GM18951 (cell line): ENCODE measurements at regions of chr22 and their contacts with region 1.

Region 1: GRCh38 chr22:40950962-40951794 is at the start of gene RBX1:
- POLR2A ChIP-seq: peak; percentile 96

Region 2: DNA sequence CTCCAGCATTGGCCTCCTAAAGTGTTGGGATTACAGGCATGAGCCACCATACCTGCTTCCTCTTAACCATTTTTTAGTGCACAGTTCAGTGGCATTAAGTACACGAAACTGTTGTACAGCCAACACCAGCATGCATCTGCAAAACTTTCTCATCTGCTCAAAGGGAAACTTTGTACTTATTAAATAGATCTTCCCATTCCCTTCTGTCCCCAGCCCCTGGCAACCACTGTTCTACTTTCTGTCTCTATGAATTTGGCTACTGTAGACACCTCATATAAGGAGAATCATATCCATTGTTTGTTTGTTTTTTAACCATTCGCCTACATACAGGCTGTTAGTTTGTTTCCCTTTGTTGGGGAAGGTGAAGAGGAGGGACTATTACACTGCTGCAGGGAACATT is 134.7 kb after region 1 on chr22:
- in situ Hi-C with region 1: loop called (anchors 10 kb)
- POLR2A ChIP-seq: no peak